Testis (tissue), 5 donors: ENCODE measurements at regions of chr18 and their contacts with region 1.

Region 1: GRCh38 chr18:6482198-6482977 is 67.7 kb upstream of the L3MBTL4 start:
- DNase-seq: peak; percentile 83
- H3K4me3 ChIP-seq: no peak overlapping the region
- H3K27ac ChIP-seq: peak overlapping the region in 1 of 2 donors; percentile 45
- H3K4me1 ChIP-seq: peaks cover 36% of the 10 kb centered on the region
- H3K27me3 ChIP-seq: no peaks in the 10 kb centered on the region
- CTCF ChIP-seq: peak; percentile 75 to 81 (median 77)
- POLR2A ChIP-seq: no peak

Region 2: GRCh38 chr18:5879479-5879882 is 602.9 kb before region 1 on chr18:
- intact Hi-C with region 1: loop called (anchors 5 kb)
- DNase-seq: no peak
- H3K4me3 ChIP-seq: no peak overlapping the region
- H3K27ac ChIP-seq: no peak overlapping the region
- H3K4me1 ChIP-seq: no peaks in the 10 kb centered on the region
- H3K27me3 ChIP-seq: no peaks in the 10 kb centered on the region
- CTCF ChIP-seq: peak; percentile 71 to 74 (median 71)
- POLR2A ChIP-seq: no peak